ENCODE measurements at regions of chr5 and their contacts with region 1.

Region 1: DNA sequence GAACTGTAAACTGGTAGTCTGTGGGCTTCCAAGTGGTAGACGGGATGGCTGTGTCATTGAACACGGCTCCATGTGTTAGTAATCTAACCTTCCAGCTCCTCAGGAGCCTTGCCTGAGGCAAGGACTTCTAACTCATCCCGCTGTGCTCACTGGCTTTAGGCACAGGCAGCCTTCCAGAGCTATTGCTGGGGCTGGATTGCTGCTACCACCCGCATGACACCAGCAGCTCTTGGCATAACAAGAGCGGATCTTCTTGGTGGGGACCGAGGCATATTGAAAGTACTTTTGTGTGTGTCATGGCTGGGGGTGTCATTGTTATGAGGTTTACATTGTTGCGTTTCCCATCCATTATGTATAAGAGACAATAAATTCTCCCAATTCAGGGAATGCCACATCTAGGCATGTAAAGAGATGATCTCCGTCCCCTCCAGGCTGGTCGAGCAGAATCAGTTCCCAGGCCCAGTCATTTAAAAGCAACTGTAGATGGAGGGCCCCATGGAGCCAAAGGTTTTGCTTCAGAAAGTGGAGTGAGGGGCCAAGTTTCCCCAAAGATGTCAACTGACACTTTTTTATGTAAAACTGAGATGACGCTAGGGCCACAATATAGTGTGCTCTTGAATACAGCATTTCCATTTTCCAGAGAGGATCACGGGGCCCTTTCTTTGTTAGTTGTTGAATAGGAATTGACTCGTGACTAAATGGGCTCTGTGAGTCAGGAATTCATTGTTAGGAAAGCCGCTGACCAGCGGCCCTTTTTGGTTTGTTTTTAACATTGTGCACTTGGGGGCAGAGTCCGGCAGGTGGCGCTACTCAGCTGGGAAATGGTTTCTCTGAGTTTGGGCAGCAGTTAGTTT is 759.6 kb downstream of the TAF11L14 start:
- DNase-seq: no peak
- ATAC-seq: peak; percentile 80
- H3K4me3 ChIP-seq: no peak overlapping the region
- H3K27ac ChIP-seq: no peak overlapping the region
- H3K4me1 ChIP-seq: no peaks in the 10 kb centered on the region
- H3K27me3 ChIP-seq: no peaks in the 10 kb centered on the region
- CTCF ChIP-seq: peak; percentile 81 to 92 (median 83)
- EP300 ChIP-seq: no peak
- POLR2A ChIP-seq: no peak
- RAD21 ChIP-seq: peak; percentile 86

Region 2: GRCh38 chr5:18370531-18370930 is 23.3 kb before region 1 on chr5:
- CTCF ChIA-PET with region 1: no interaction called
- POLR2A ChIA-PET with region 1: no interaction called
- RAD21 ChIA-PET with region 1: no interaction called
- SMC1A ChIA-PET with region 1: no interaction called
- in situ Hi-C with region 1: no loop called
- intact Hi-C with region 1: no loop called
- DNase-seq: no peak
- ATAC-seq: no peak
- H3K4me3 ChIP-seq: no peak overlapping the region
- H3K27ac ChIP-seq: no peak overlapping the region
- H3K4me1 ChIP-seq: no peaks in the 10 kb centered on the region
- H3K27me3 ChIP-seq: no peaks in the 10 kb centered on the region
- CTCF ChIP-seq: no peak
- EP300 ChIP-seq: no peak
- POLR2A ChIP-seq: no peak
- RAD21 ChIP-seq: no peak

Region 3: GRCh38 chr5:19608444-19609002 is 1214.7 kb after region 1 on chr5:
- CTCF ChIA-PET with region 1: no interaction called
- POLR2A ChIA-PET with region 1: no interaction called
- RAD21 ChIA-PET with region 1: no interaction called
- SMC1A ChIA-PET with region 1: interaction called, 7 read pairs
- in situ Hi-C with region 1: no loop called
- intact Hi-C with region 1: loop called (anchors 5 kb)
- DNase-seq: no peak
- ATAC-seq: no peak
- H3K4me3 ChIP-seq: no peak overlapping the region
- H3K27ac ChIP-seq: no peak overlapping the region
- H3K4me1 ChIP-seq: no peaks in the 10 kb centered on the region
- H3K27me3 ChIP-seq: no peaks in the 10 kb centered on the region
- CTCF ChIP-seq: peak in 2 of 3 experiments; percentile 4 to 32; a peak in 1 of 6 replicates
- EP300 ChIP-seq: no peak
- POLR2A ChIP-seq: no peak
- RAD21 ChIP-seq: no peak